Naive thymus-derived CD8-positive, alpha-beta T cell (primary cell): ENCODE measurements at regions of chr17 and their contacts with region 1.

Region 1: DNA sequence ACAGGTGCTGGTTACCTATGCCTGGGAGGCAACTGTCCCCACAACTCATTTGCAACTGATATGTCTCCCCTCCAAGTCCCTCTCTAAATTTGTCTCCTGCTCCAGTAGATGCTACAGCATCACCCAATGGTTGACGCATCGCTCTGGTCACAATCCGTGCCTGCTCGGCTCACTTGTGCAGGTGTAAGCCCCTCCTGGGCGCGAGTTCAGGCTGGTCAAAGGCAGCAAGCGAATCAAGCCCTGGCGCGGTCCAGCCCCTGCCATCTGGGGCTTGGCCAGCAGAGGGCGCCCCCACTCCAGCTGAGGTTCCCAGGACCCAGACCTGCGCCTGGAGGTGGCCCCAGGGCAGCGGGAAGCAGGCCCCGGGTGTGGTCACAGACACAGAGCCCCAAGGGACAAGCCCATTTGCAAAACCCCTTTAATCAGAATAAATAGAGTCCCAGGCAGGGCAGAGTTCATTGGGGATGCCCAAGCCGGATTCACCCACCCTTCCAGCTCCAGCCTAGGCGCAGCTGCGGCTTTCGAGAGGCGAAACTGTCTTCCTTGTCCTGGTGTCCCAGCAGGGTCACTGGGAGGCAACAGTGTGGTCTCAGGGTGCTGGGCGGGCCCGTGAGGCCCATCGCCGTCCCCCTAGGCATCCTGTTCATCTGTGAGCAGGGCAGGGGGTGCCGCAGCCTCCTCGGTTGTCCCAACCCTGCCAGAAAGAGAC is 15.9 kb downstream of the TMC6 start:
- DNase-seq: peak; percentile 51 to 86 (median 77)
- ATAC-seq: peak; percentile 62 to 67
- H3K4me3 Mint-ChIP-seq: peak overlapping the region in 8 of 10 donors; percentile 49 to 82 (median 64)
- H3K27ac Mint-ChIP-seq: peak overlapping the region; percentile 67 to 99 (median 92)
- H3K4me1 Mint-ChIP-seq: peaks cover 33 to 64% (median 52%) of the 10 kb centered on the region in 4 donors
- H3K27me3 Mint-ChIP-seq: no peaks in the 10 kb centered on the region

Region 2: GRCh38 chr17:78010759-78011158 is 101.9 kb before region 1 on chr17:
- POLR2A ChIA-PET with region 1: no interaction called
- DNase-seq: peak in 7 of 10 donors; percentile 15 to 65 (median 32)
- ATAC-seq: peak; percentile 63 to 67
- H3K4me3 Mint-ChIP-seq: peak overlapping the region in 6 of 10 donors; percentile 14 to 74 (median 54)
- H3K27ac Mint-ChIP-seq: peak overlapping the region in 7 of 10 donors; percentile 49 to 85 (median 79)
- H3K4me1 Mint-ChIP-seq: peaks cover 13 to 48% (median 37%) of the 10 kb centered on the region in 4 donors
- H3K27me3 Mint-ChIP-seq: no peaks in the 10 kb centered on the region

Region 3: GRCh38 chr17:78057113-78057740 is 55.4 kb before region 1 on chr17:
- POLR2A ChIA-PET with region 1: no interaction called
- DNase-seq: no peak
- ATAC-seq: no peak
- H3K4me3 Mint-ChIP-seq: no peak overlapping the region
- H3K27ac Mint-ChIP-seq: peak overlapping the region in 7 of 10 donors; percentile 1 to 58 (median 35)
- H3K4me1 Mint-ChIP-seq: peaks cover 11 to 53% (median 30%) of the 10 kb centered on the region in 4 donors
- H3K27me3 Mint-ChIP-seq: no peaks in the 10 kb centered on the region

Region 4: GRCh38 chr17:78140169-78140976 is 27.7 kb after region 1 on chr17:
- POLR2A ChIA-PET with region 1: interaction called, 1,112 read pairs
- DNase-seq: peak; percentile 83 to 97 (median 94)
- ATAC-seq: peak; percentile 81 to 89
- H3K4me3 Mint-ChIP-seq: peak overlapping the region; percentile 47 to 78 (median 68)
- H3K27ac Mint-ChIP-seq: peak overlapping the region; percentile 79 to 97 (median 93)
- H3K4me1 Mint-ChIP-seq: peaks cover 41 to 88% (median 81%) of the 10 kb centered on the region in 4 donors
- H3K27me3 Mint-ChIP-seq: no peaks in the 10 kb centered on the region